ENCODE measurements at regions of chr19 and their contacts with region 1.

Region 1: DNA sequence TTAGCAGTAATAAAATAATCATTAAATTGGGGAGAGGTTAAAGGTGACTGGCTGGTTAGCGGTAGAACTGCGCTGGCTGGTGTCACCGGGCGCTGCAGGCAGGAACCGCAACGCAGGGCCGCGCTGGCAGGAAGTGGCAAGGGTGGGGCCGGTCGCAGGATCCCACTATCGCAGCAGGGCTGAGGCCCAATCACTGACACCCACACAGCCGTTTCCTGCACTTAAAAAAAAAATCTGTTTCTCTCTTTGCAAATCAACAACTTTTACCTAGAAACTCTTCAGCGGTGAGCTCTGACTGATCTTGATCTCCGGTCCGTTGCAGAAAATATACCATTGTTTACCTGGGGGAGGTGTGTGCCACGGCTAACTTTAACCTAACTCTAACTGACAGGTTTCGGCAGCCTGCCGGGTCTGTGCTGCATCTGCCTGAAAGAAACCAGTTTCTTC is 46.9 kb downstream of the KLF2 start:
- DNase-seq: peak; percentile 95 to 97 (median 95)
- H3K4me3 ChIP-seq: peak overlapping the region in 1 of 2 donors; percentile 47
- H3K4me3 Mint-ChIP-seq: no peak overlapping the region
- H3K27ac ChIP-seq: peak overlapping the region; percentile 89
- H3K27ac Mint-ChIP-seq: no peak overlapping the region
- H3K4me1 ChIP-seq: peaks cover 98% of the 10 kb centered on the region
- H3K4me1 Mint-ChIP-seq: peaks cover 0 to 60% (median 31%) of the 10 kb centered on the region in 4 donors
- H3K27me3 ChIP-seq: no peaks in the 10 kb centered on the region
- H3K27me3 Mint-ChIP-seq: no peaks in the 10 kb centered on the region

Region 2: DNA sequence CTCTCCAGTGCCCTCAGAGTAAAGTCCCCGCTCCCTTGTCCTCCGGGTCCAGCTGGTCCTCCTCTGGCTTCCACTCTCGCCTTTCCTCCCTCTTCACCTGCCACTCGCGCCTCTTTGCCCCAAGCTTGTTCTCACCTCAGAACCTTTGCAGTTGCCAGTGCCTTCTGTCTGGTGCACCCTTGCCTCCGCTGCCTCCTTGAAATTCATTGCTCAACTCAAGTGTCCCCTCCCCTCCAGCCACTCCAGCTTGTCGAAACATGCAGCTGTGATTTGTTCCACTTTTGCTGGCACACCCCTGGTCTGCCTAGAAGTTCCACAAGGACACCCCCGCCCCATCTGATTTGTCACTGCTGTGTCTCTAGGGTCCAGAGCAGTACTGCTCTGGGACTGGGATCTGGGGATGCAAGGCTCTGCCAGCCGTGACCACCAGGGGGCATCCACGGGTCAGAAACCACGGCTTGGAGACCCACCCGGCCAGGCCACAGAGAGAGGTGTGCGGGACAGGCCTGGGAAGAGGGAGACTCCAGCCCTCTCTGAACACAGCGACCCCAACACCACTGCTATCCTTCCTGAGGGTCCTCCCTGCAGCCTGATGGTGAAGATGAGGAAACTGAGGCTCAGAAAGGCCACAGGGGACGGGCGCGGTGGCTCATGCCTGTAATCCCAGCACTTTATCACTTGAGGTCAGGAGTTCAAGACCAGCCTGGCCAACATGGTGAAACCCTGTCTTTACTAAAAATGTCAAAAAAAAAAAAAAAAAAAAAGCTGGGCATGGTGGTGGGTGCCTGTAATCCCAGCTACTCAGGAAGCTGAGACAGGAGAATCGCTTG is 124.0 kb before region 1 on chr19:
- CTCF ChIA-PET with region 1: interaction called, 39 read pairs
- POLR2A ChIA-PET with region 1: interaction called, 56 read pairs
- intact Hi-C with region 1: no loop called
- DNase-seq: peak; percentile 71 to 80 (median 73)
- H3K4me3 ChIP-seq: no peak overlapping the region
- H3K4me3 Mint-ChIP-seq: peak overlapping the region in 6 of 8 donors; percentile 23 to 66 (median 54)
- H3K27ac ChIP-seq: no peak overlapping the region
- H3K27ac Mint-ChIP-seq: peak overlapping the region; percentile 61 to 84 (median 67)
- H3K4me1 ChIP-seq: peaks cover 17% of the 10 kb centered on the region
- H3K4me1 Mint-ChIP-seq: peaks cover 11 to 26% (median 21%) of the 10 kb centered on the region in 4 donors
- H3K27me3 ChIP-seq: no peaks in the 10 kb centered on the region
- H3K27me3 Mint-ChIP-seq: peaks cover 0 to 3% of the 10 kb centered on the region in 2 donors

Region 3: GRCh38 chr19:16266586-16266942 is 105.0 kb before region 1 on chr19:
- CTCF ChIA-PET with region 1: no interaction called
- POLR2A ChIA-PET with region 1: interaction called, 40 read pairs
- intact Hi-C with region 1: no loop called
- DNase-seq: peak; percentile 59 to 81 (median 70)
- H3K4me3 ChIP-seq: peak overlapping the region in 1 of 2 donors; percentile 14
- H3K4me3 Mint-ChIP-seq: peak overlapping the region in 7 of 8 donors; percentile 21 to 79 (median 67)
- H3K27ac ChIP-seq: peak overlapping the region; percentile 33
- H3K27ac Mint-ChIP-seq: peak overlapping the region; percentile 84 to 93 (median 89)
- H3K4me1 ChIP-seq: peaks cover 58% of the 10 kb centered on the region
- H3K4me1 Mint-ChIP-seq: peaks cover 39 to 68% (median 53%) of the 10 kb centered on the region in 4 donors
- H3K27me3 ChIP-seq: no peaks in the 10 kb centered on the region
- H3K27me3 Mint-ChIP-seq: no peaks in the 10 kb centered on the region

Region 4: GRCh38 chr19:16338470-16339360 is 32.8 kb before region 1 on chr19:
- CTCF ChIA-PET with region 1: interaction called, 48 read pairs
- POLR2A ChIA-PET with region 1: interaction called, 6,478 read pairs
- intact Hi-C with region 1: no loop called
- DNase-seq: peak; percentile 29 to 73 (median 46)
- H3K4me3 ChIP-seq: peak overlapping the region; percentile 48
- H3K4me3 Mint-ChIP-seq: peak overlapping the region; percentile 83 to 97 (median 90)
- H3K27ac ChIP-seq: peak overlapping the region; percentile 66
- H3K27ac Mint-ChIP-seq: peak overlapping the region; percentile 78 to 99 (median 96)
- H3K4me1 ChIP-seq: peaks cover 70% of the 10 kb centered on the region
- H3K4me1 Mint-ChIP-seq: peaks cover 41 to 77% (median 56%) of the 10 kb centered on the region in 4 donors
- H3K27me3 ChIP-seq: no peaks in the 10 kb centered on the region
- H3K27me3 Mint-ChIP-seq: no peaks in the 10 kb centered on the region